PC-9 (cell line): ENCODE measurements at regions of chr16 and their contacts with region 1.

Region 1: DNA sequence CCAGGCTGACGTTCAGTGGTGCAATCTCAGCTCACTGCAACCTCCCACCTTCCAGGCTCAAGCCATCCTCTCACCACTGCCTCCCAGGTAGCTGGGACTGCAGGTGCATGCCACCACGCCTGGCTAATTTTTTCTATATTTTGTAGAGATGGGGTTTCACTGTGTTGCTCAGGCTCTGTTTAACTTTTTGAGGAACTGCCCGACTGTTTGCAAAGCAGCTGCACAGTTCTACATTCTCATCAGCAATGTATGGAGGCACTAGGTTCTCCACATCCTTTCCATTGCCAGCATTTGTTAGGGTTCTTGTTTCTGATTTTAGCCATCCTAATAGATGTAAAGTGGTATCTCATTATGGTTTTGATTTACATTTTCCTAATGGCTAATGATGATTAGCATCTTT is 9.4 kb downstream of the TNRC6A start:
- DNase-seq: no peak
- H3K4me3 ChIP-seq: no peak overlapping the region
- H3K27ac ChIP-seq: no peak overlapping the region
- H3K4me1 ChIP-seq: peaks cover 47% of the 10 kb centered on the region
- H3K27me3 ChIP-seq: no peaks in the 10 kb centered on the region
- CTCF ChIP-seq: no peak

Region 2: DNA sequence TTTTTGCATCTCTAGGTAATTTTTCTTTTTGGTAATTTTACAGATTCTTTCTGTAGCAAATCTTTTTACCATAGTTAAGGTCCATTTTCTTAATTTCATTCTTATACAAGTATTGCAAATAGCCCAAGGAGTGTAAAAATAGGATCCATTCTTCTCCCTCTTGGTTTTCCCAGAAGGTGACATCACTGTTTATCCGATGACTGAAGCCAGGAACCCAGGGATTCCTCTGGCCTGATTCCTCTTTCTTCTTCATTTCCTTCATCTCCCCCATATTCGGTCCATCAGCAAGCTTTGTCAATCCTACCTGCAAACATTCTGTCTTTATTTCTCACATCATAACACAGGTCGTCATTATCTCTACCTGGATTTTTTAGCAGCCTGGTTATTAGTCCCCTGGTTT is 194.3 kb before region 1 on chr16:
- CTCF ChIA-PET with region 1: interaction called, 3 read pairs
- POLR2A ChIA-PET with region 1: interaction called, 12 read pairs
- intact Hi-C with region 1: no loop called
- DNase-seq: no peak
- H3K4me3 ChIP-seq: no peak overlapping the region
- H3K27ac ChIP-seq: no peak overlapping the region
- H3K4me1 ChIP-seq: peaks cover 22% of the 10 kb centered on the region
- H3K27me3 ChIP-seq: no peaks in the 10 kb centered on the region
- CTCF ChIP-seq: no peak

Region 3: DNA sequence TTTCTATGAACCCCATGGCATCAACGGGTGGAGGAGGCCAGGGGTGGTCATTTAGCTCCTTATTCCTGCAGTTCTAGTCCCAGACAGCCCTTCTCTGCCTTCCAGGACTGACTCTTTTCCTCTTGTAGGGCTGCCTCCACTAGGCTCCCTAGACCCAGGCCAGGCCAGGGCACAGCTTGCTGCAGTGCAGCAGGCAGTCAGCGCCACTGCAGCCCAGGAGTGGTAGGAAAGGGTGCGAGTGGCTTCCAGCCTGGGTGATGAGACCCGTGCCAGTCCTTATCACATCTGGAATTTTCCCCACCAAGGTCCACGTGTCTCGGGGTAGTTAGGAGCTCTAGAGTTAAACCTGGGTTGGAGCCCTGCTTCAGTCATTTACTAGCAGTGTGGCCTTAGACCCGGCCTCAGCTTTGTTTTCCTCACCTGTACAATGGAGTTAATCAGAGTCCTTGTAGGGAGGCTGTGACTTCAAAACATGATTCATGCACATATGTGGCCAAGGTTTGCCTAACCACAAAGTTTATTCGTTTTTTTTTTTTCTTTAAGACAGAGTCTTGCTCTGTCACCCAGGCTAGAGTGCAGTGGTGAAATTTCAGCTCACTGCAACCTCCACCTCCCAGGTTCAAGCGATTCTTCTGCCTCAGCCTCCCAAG is 111.5 kb after region 1 on chr16:
- CTCF ChIA-PET with region 1: interaction called, 4 read pairs
- POLR2A ChIA-PET with region 1: interaction called, 10 read pairs
- intact Hi-C with region 1: no loop called
- DNase-seq: peak in 1 of 2 experiments; percentile 43
- H3K4me3 ChIP-seq: no peak overlapping the region
- H3K27ac ChIP-seq: no peak overlapping the region
- H3K4me1 ChIP-seq: peaks cover 21% of the 10 kb centered on the region
- H3K27me3 ChIP-seq: no peaks in the 10 kb centered on the region
- CTCF ChIP-seq: no peak